WTC11 (cell line): ENCODE measurements at regions of chr6 and their contacts with region 1.

Region 1: DNA sequence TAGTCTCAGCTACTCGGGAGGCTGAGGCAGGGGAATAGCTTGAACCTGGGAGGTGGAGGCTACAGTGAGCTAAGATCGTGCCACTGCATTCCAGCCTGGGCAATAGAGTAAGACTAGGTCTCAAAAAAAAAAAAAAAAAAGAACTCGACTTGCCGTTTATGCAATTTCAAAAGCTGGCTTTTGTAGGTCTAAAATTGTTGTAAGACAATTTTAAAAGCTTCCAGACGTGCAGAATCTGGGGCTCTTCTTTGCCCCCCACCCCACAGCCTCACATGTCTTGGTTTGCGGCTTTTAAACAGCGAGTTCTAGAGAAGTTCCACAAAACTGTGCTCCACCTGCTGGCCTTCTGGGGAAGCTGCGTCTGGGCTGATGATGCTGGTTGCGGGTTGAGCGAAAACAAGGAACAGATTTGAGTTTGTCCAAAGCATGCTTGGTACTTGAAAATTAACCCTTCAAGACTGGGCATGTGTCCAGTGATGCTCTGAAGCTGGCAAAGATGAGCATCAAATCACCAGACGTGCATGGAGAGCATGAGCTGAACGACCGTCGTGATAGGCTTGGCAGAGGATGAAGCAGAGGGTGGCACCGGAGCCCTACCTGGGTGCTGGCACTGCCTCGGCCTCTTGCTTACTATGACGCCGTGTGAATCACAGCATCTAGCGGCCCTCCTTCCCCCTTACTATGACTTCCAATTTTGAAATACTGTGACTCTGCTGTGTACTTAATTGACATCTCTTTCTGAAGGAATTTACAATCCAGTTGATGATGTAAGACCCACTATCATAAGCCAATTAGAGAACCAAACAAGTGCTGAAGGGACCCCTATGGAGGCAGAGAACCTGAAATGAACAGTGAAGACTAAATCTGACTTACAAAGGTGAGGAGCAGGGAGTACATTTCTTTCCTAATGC is 171.4 kb downstream of the GMPR start:
- DNase-seq: peak; percentile 68
- ATAC-seq: peak; percentile 89
- H3K4me3 Mint-ChIP-seq: no peak overlapping the region
- H3K27ac Mint-ChIP-seq: no peak overlapping the region
- H3K4me1 Mint-ChIP-seq: no peaks in the 10 kb centered on the region
- H3K27me3 Mint-ChIP-seq: no peaks in the 10 kb centered on the region
- CTCF ChIP-seq: peak; percentile 67

Region 2: DNA sequence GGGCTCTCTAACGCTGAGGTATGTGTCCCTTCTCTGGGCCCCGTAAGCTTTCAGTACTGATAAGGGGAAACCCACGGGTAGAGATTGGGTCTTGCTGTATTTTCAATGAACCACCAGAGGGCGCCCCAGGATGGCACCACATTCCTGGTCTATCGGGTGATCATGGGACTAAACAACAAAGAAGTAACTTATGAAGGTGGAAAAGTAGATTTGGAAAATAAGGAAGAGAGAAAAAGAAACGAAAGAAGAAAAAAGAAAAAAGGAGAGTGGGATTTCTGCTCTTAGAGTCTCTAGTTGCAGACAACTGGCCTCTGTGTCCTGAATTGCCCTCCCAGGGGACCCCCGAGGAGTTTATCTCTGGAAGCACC is 77.6 kb before region 1 on chr6:
- CTCF ChIA-PET with region 1: interaction called, 14 read pairs
- POLR2A ChIA-PET with region 1: interaction called, 7 read pairs
- DNase-seq: peak; percentile 88
- ATAC-seq: peak; percentile 98
- H3K4me3 Mint-ChIP-seq: no peak overlapping the region
- H3K27ac Mint-ChIP-seq: no peak overlapping the region
- H3K4me1 Mint-ChIP-seq: peaks cover 5% of the 10 kb centered on the region
- H3K27me3 Mint-ChIP-seq: no peaks in the 10 kb centered on the region
- CTCF ChIP-seq: peak; percentile 84

Region 3: GRCh38 chr6:16338577-16339262 is 71.1 kb before region 1 on chr6:
- CTCF ChIA-PET with region 1: interaction called, 13 read pairs
- POLR2A ChIA-PET with region 1: no interaction called
- DNase-seq: no peak
- ATAC-seq: peak; percentile 82
- H3K4me3 Mint-ChIP-seq: no peak overlapping the region
- H3K27ac Mint-ChIP-seq: no peak overlapping the region
- H3K4me1 Mint-ChIP-seq: peaks cover 11% of the 10 kb centered on the region; the same call in 1 of the 2 replicates
- H3K27me3 Mint-ChIP-seq: no peaks in the 10 kb centered on the region
- CTCF ChIP-seq: no peak

Region 4: DNA sequence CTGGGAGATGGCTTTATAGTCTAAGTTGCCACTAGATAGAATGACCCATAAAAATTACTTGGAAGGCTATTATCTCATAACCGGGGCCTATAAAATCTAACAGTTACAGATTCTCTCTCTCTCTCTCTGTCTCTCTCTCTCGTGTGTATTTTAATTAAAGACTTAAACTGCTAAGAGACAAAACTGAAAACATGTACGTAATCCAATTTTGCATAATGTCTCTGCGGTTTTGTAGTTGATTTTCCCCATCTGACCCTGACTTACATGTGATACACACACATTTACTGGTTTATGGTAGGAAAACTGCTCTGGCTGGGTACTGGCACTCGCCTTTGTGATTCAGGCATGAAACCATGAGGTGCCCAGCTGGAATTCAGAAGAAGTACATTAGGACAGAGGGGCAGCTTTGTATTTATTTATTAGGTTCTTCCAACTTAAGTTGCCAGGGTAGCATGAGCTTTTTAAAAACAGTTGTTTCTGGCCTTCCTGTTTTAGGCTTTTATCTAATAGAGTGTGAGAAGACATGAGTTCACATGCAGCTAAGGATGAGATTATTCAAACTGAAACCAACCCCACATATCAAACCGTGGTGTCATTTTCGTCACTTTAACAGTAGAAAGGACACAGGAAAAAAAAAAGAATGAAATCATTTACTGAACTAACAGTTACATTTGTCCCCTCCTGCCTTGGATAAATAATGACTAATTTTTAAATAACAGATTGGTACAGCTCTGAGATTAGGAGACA is 11.1 kb after region 1 on chr6:
- CTCF ChIA-PET with region 1: interaction called, 10 read pairs
- POLR2A ChIA-PET with region 1: no interaction called
- DNase-seq: no peak
- ATAC-seq: peak; percentile 58; the same call in 1 of the 2 replicates
- H3K4me3 Mint-ChIP-seq: no peak overlapping the region
- H3K27ac Mint-ChIP-seq: no peak overlapping the region; the same call in 1 of the 2 replicates
- H3K4me1 Mint-ChIP-seq: peaks cover 20% of the 10 kb centered on the region
- H3K27me3 Mint-ChIP-seq: no peaks in the 10 kb centered on the region
- CTCF ChIP-seq: no peak

Region 5: DNA sequence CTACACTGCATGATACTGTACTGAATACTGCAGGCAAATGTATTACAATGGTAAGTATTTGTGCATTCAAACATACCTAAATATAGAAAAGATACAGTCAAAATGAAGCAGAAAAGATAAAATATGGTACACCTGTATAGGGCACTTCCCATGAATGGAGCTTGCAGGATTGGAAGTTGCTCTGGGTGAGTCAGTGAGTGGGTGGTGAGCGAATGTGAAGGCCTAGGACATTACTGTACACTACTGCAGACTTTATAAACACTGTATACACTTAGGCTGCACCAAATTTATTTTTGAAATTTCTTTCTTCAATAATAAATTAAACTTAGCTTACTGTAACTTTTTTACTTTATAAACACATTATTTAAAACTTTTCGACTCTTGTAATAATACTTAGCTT is 138.3 kb after region 1 on chr6:
- CTCF ChIA-PET with region 1: no interaction called
- POLR2A ChIA-PET with region 1: no interaction called
- DNase-seq: no peak
- ATAC-seq: no peak
- H3K4me3 Mint-ChIP-seq: no peak overlapping the region
- H3K27ac Mint-ChIP-seq: no peak overlapping the region
- H3K4me1 Mint-ChIP-seq: peaks cover 4% of the 10 kb centered on the region; the same call in 1 of the 2 replicates
- H3K27me3 Mint-ChIP-seq: no peaks in the 10 kb centered on the region
- CTCF ChIP-seq: no peak